CD8-positive, alpha-beta T cell (primary cell): ENCODE measurements at regions of chr14 and their contacts with region 1.

Region 1: DNA sequence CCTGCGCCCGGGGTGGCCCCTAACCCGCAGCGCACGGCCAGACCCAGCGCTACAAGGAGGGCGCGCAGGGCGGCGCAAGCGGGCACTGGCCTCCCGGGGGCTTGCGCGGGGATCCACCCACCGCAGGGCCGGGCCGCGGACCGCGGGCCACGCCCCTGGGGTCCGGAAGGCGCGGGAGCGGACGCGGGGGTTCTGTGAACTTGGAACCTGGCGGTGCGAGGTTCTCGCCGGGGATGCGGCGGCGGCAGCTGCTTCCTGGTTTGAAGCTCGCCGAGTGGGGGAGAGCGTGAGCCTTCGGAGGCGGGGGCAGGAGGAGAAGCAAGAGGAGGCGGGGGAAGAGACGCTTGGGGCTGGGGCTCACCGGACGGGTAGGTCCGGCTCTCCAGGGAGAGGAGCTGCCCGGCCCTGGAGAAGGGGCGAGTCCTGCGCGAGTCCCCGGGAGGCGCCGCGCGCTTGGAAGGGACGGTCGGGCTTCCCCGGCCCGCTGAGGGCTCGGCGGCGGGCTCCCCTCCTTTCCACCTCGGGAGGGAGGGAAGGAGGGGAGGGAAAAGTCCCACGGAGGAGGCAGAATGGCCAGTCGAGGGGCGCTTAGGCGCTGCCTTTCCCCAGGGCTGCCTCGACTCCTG is at the start of gene PRKCH:
- DNase-seq: peak; percentile 71 to 92 (median 86)
- ATAC-seq: peak; percentile 68
- H3K4me3 ChIP-seq: peak within 1 kb of the TSS; percentile 90 to 94
- H3K4me3 Mint-ChIP-seq: peak within 1 kb of the TSS; percentile 96
- H3K27ac ChIP-seq: peak within 1 kb of the TSS; percentile 86
- H3K27ac Mint-ChIP-seq: peak within 1 kb of the TSS; percentile 95
- H3K4me1 ChIP-seq: peaks cover 29% of the 10 kb centered on the region
- H3K4me1 Mint-ChIP-seq: peaks cover 26% of the 10 kb centered on the region
- H3K27me3 ChIP-seq: no peaks in the 10 kb centered on the region
- H3K27me3 Mint-ChIP-seq: no peaks in the 10 kb centered on the region
- CTCF ChIP-seq: no peak
- total RNA-seq, gene PRKCH: 429 to 433 TPM

Region 2: DNA sequence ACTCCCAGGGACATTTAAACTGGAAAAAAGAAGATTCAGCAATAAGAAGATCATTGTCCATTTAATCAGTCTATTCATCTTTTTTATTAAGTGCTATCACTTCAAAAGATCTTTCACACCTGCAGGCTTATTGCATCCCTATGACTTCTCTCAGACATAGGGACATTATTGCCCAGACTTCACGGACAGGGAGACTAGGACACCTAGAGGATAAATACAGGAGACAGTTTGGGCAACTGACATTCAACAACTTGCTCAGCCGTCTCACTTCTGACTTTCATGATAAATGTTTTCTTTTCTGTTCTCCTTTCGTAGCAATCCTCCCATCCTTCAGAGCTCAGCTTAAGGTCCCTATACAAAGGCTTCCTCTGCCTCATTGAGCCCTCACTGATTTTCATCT is 124.7 kb before region 1 on chr14:
- CTCF ChIA-PET with region 1: no interaction called
- POLR2A ChIA-PET with region 1: no interaction called
- intact Hi-C with region 1: no loop called
- DNase-seq: no peak
- ATAC-seq: no peak
- H3K4me3 ChIP-seq: no peak overlapping the region
- H3K4me3 Mint-ChIP-seq: no peak overlapping the region
- H3K27ac ChIP-seq: no peak overlapping the region
- H3K27ac Mint-ChIP-seq: no peak overlapping the region
- H3K4me1 ChIP-seq: no peaks in the 10 kb centered on the region
- H3K4me1 Mint-ChIP-seq: no peaks in the 10 kb centered on the region
- H3K27me3 ChIP-seq: peaks cover 0 to 3% of the 10 kb centered on the region in 2 experiments
- H3K27me3 Mint-ChIP-seq: peaks cover 29% of the 10 kb centered on the region
- CTCF ChIP-seq: no peak

Region 3: DNA sequence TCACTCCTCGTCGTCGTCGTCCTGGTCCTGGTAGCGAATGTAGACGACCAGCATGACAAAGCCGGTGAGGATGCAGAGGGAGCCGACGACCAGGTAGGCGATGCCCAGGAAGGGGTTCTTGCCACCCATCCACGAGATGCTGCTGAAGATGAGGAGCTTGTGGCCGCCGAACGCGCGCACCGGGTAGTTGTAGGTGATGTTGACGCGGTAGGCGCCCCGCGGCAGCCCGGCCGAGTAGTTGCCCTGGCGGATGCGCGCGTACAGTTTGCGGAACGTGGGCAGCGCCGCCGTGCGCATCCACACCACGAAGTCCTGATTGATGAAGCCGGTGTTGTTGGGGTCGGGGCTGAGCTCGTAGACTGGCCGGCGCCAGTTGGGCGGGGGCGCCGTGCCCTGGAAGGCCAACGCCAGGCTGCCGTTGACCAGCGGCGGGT is 41.4 kb before region 1 on chr14:
- CTCF ChIA-PET with region 1: no interaction called
- POLR2A ChIA-PET with region 1: no interaction called
- intact Hi-C with region 1: no loop called
- DNase-seq: peak in 7 of 9 experiments; percentile 5 to 70 (median 48)
- ATAC-seq: peak; percentile 29
- H3K4me3 ChIP-seq: peak overlapping the region; percentile 64 to 66
- H3K4me3 Mint-ChIP-seq: peak overlapping the region; percentile 93
- H3K27ac ChIP-seq: peak overlapping the region; percentile 71 to 82
- H3K27ac Mint-ChIP-seq: peak overlapping the region; percentile 95
- H3K4me1 ChIP-seq: peaks cover 15% of the 10 kb centered on the region
- H3K4me1 Mint-ChIP-seq: peaks cover 29% of the 10 kb centered on the region
- H3K27me3 ChIP-seq: no peaks in the 10 kb centered on the region
- H3K27me3 Mint-ChIP-seq: peaks cover 2% of the 10 kb centered on the region
- CTCF ChIP-seq: no peak

Region 4: GRCh38 chr14:61296719-61297502 is 24.6 kb before region 1 on chr14:
- CTCF ChIA-PET with region 1: interaction called, 4 read pairs
- POLR2A ChIA-PET with region 1: interaction called, 3 read pairs
- intact Hi-C with region 1: loop called (anchors 2 kb)
- DNase-seq: peak in 2 of 9 experiments; percentile 69 to 79
- ATAC-seq: peak; percentile 73
- H3K4me3 ChIP-seq: no peak overlapping the region
- H3K4me3 Mint-ChIP-seq: no peak overlapping the region
- H3K27ac ChIP-seq: peak overlapping the region in 1 of 2 experiments; percentile 40
- H3K27ac Mint-ChIP-seq: peak overlapping the region; percentile 78
- H3K4me1 ChIP-seq: peaks cover 39% of the 10 kb centered on the region
- H3K4me1 Mint-ChIP-seq: peaks cover 54% of the 10 kb centered on the region
- H3K27me3 ChIP-seq: no peaks in the 10 kb centered on the region
- H3K27me3 Mint-ChIP-seq: no peaks in the 10 kb centered on the region
- CTCF ChIP-seq: peak; percentile 89

Region 5: GRCh38 chr14:61342486-61342885 is 21.0 kb after region 1 on chr14:
- CTCF ChIA-PET with region 1: interaction called, 16 read pairs
- POLR2A ChIA-PET with region 1: interaction called, 96 read pairs
- intact Hi-C with region 1: loop called (anchors 1 to 2 kb)
- DNase-seq: peak; percentile 60 to 94 (median 85)
- ATAC-seq: peak; percentile 49
- H3K4me3 ChIP-seq: peak overlapping the region in 1 of 2 experiments; percentile 25
- H3K4me3 Mint-ChIP-seq: peak overlapping the region; percentile 77
- H3K27ac ChIP-seq: peak overlapping the region; percentile 39 to 77
- H3K27ac Mint-ChIP-seq: peak overlapping the region; percentile 99
- H3K4me1 ChIP-seq: peaks cover 94% of the 10 kb centered on the region
- H3K4me1 Mint-ChIP-seq: peaks cover 95% of the 10 kb centered on the region
- H3K27me3 ChIP-seq: no peaks in the 10 kb centered on the region
- H3K27me3 Mint-ChIP-seq: no peaks in the 10 kb centered on the region
- CTCF ChIP-seq: no peak

Region 6: DNA sequence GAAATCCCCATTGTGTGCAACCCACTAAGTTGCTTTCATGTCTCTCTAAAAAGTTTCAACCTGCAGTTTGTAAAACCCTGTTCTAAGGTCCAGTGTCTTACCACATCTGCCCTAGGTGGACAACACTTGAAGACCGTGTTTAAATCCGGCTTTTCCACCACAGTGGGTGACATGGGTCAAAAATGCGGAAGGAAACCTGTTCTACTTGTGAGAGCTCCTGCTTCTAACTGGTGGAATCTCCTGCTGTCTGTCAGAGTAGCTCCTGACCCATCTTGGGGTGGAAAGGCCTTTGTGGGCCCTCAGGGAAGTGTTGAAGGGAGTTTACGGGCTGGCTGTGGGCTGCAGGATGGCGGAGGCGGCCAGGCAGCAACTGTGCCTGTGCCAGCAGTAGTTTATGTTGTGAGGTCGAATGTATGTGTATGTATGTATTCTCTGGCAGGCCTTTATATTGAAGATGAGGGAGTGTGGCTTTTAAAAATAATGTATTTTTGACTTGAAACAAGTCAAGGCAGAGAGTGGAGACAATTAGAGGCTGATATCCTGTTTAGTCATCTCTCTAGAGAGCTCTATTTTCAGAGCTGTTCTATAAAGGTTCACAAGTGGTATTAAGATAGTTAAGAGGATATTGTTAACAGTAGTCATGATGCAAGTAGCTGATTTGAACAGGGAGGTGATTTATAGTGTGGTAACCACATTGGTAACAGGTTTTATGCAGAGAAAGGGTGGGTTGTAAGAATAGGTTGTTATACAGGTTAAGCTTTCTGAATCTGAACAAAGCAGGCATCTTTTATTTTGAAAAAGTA is 66.9 kb after region 1 on chr14:
- CTCF ChIA-PET with region 1: interaction called, 4 read pairs
- POLR2A ChIA-PET with region 1: interaction called, 20 read pairs
- intact Hi-C with region 1: loop called (anchors 1 to 2 kb)
- DNase-seq: peak in 4 of 9 experiments; percentile 43 to 81 (median 54)
- ATAC-seq: peak; percentile 69
- H3K4me3 ChIP-seq: peak overlapping the region; percentile 32 to 46
- H3K4me3 Mint-ChIP-seq: no peak overlapping the region
- H3K27ac ChIP-seq: peak overlapping the region; percentile 53 to 90
- H3K27ac Mint-ChIP-seq: no peak overlapping the region
- H3K4me1 ChIP-seq: peaks cover 98% of the 10 kb centered on the region
- H3K4me1 Mint-ChIP-seq: no peaks in the 10 kb centered on the region
- H3K27me3 ChIP-seq: no peaks in the 10 kb centered on the region
- H3K27me3 Mint-ChIP-seq: no peaks in the 10 kb centered on the region
- CTCF ChIP-seq: no peak

Region 7: DNA sequence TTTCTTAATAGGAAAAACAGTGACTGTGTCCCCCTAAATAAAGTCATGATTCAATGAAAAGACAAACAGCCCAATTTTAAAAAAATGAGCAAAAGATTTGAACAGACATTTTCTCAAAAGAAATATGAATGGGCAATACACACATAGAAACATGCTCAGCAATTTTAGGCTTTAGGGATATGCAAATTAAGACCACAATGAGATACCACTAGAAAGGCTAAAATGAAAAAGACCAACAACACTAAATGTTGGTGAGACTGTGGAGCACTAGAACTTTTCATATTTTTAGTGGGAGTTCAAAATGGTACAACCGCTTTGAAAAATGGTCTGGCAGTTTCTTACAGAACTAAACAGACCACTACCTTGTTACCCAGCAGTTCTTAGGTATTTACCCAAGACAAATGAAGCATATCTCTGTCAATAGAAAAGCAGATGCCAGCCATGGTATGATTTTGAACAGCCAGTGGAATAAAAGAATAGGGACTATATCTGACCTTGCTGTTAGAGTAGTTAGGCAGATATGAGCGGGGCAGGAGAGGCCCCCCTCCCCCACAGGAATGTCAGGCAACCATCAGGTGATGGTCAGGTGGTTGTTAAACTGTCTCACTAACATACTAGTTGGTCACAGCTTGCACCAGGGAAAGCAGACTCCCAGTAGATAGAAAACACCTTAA is 108.7 kb after region 1 on chr14:
- CTCF ChIA-PET with region 1: interaction called, 3 read pairs
- POLR2A ChIA-PET with region 1: interaction called, 10 read pairs
- intact Hi-C with region 1: no loop called
- DNase-seq: peak in 1 of 9 experiments; percentile 34
- ATAC-seq: no peak
- H3K4me3 ChIP-seq: no peak overlapping the region
- H3K4me3 Mint-ChIP-seq: no peak overlapping the region
- H3K27ac ChIP-seq: peak overlapping the region in 1 of 2 experiments; percentile 14
- H3K27ac Mint-ChIP-seq: peak overlapping the region; percentile 74
- H3K4me1 ChIP-seq: peaks cover 89% of the 10 kb centered on the region
- H3K4me1 Mint-ChIP-seq: peaks cover 93% of the 10 kb centered on the region
- H3K27me3 ChIP-seq: no peaks in the 10 kb centered on the region
- H3K27me3 Mint-ChIP-seq: no peaks in the 10 kb centered on the region
- CTCF ChIP-seq: no peak

Region 8: DNA sequence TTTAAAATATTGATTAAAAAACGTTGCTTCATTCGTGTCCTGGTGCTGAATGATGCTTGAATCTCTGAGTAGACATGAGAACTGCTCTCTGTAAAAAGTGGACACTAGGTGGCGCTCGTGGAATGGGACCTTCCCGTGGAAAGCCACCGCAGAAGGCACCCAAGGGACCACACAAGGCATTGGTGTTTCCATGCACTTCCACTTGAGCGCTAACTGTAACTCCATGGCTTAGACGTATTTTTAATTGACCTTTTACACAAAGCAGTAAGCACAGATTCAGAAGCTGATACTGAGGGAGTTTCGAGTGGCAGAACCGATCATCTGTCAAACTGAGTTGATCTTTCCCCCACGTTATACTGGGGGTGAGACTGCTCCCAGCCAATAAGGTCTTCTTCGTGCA is 135.2 kb after region 1 on chr14:
- CTCF ChIA-PET with region 1: interaction called, 8 read pairs
- POLR2A ChIA-PET with region 1: interaction called, 16 read pairs
- intact Hi-C with region 1: loop called (anchors 1 to 2 kb)
- DNase-seq: peak; percentile 66 to 91 (median 86)
- ATAC-seq: peak; percentile 39
- H3K4me3 ChIP-seq: no peak overlapping the region
- H3K4me3 Mint-ChIP-seq: no peak overlapping the region
- H3K27ac ChIP-seq: no peak overlapping the region
- H3K27ac Mint-ChIP-seq: peak overlapping the region; percentile 86
- H3K4me1 ChIP-seq: peaks cover 70% of the 10 kb centered on the region
- H3K4me1 Mint-ChIP-seq: peaks cover 85% of the 10 kb centered on the region
- H3K27me3 ChIP-seq: no peaks in the 10 kb centered on the region
- H3K27me3 Mint-ChIP-seq: no peaks in the 10 kb centered on the region
- CTCF ChIP-seq: peak; percentile 84